ENCODE measurements at regions of chr1 and their contacts with region 1.

Region 1: GRCh38 chr1:6052543-6053205 is 7.0 kb downstream of the KCNAB2 start:
- DNase-seq: no peak
- ATAC-seq: peak; percentile 76
- H3K4me3 ChIP-seq: no peak overlapping the region
- H3K27ac ChIP-seq: no peak overlapping the region
- H3K4me1 ChIP-seq: no peaks in the 10 kb centered on the region
- H3K27me3 ChIP-seq: no peaks in the 10 kb centered on the region
- CTCF ChIP-seq: peak; percentile 54 to 77 (median 65); a peak in 5 of 6 replicates
- POLR2A ChIP-seq: no peak
- RAD21 ChIP-seq: peak; percentile 82

Region 2: GRCh38 chr1:6065093-6065858 is 12.6 kb after region 1 on chr1:
- CTCF ChIA-PET with region 1: no interaction called
- POLR2A ChIA-PET with region 1: no interaction called
- RAD21 ChIA-PET with region 1: no interaction called
- intact Hi-C with region 1: no loop called
- DNase-seq: no peak
- ATAC-seq: no peak
- H3K4me3 ChIP-seq: no peak overlapping the region
- H3K27ac ChIP-seq: no peak overlapping the region
- H3K4me1 ChIP-seq: no peaks in the 10 kb centered on the region
- H3K27me3 ChIP-seq: no peaks in the 10 kb centered on the region
- CTCF ChIP-seq: no peak
- POLR2A ChIP-seq: no peak
- RAD21 ChIP-seq: no peak

Region 3: GRCh38 chr1:6099787-6100765 is 47.4 kb after region 1 on chr1:
- CTCF ChIA-PET with region 1: no interaction called
- POLR2A ChIA-PET with region 1: no interaction called
- RAD21 ChIA-PET with region 1: no interaction called
- intact Hi-C with region 1: loop called (anchors 1 kb)
- DNase-seq: no peak
- ATAC-seq: peak; percentile 81
- H3K4me3 ChIP-seq: no peak overlapping the region
- H3K27ac ChIP-seq: no peak overlapping the region
- H3K4me1 ChIP-seq: no peaks in the 10 kb centered on the region; a peak in 2 of 4 replicates
- H3K27me3 ChIP-seq: no peaks in the 10 kb centered on the region
- CTCF ChIP-seq: peak in 2 of 3 experiments; percentile 25 to 30; a peak in 3 of 6 replicates
- POLR2A ChIP-seq: no peak
- RAD21 ChIP-seq: no peak; the same call in 1 of the 2 replicates

Region 4: GRCh38 chr1:6180212-6180575 is 127.5 kb after region 1 on chr1 and contains the start of gene CHD5:
- CTCF ChIA-PET with region 1: no interaction called
- POLR2A ChIA-PET with region 1: no interaction called
- RAD21 ChIA-PET with region 1: no interaction called
- intact Hi-C with region 1: loop called (anchors 5 kb)
- DNase-seq: no peak
- ATAC-seq: peak; percentile 39
- H3K4me3 ChIP-seq: peak within 1 kb of the TSS; percentile 37 to 54
- H3K27ac ChIP-seq: peak within 1 kb of the TSS; percentile 15; the same call in 1 of the 2 replicates
- H3K4me1 ChIP-seq: peaks cover 12 to 26% of the 10 kb centered on the region in 2 experiments
- H3K27me3 ChIP-seq: no peaks in the 10 kb centered on the region
- CTCF ChIP-seq: no peak
- POLR2A ChIP-seq: no peak
- RAD21 ChIP-seq: no peak
- total RNA-seq, gene CHD5: 6.1 TPM

Region 5: DNA sequence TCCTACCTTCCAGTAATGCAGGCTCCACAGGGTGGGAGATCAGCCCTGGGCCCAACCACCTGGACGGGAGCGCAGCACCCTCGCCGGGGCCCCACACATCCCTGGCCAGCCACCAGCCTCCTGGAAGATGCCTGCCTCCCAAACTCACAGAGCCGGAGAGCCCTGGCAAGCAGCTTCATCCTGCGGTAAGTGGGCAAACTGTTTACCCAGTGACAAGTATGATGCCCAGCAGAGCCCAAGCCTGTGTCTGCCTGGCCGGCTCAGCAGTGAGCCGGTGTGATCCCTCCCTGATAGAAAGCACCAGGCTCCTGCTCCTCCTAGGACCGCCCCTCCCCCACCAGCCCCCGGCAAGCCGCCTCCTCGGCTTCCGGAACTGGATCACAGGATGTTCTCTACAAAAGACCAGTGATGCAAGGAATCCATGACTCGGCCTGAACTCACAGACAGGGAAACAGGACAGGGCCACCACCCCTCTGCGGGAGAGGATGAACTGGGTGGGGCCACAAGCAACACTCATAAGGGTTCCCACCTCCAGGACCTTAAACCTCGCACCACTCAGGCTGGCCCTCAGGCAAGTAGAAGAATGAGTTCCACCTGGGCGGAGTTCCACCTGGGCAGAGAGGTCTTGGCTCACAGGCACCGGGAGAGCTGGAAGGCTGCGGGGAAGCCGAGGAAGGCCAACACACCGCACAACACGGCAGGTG is 333.0 kb after region 1 on chr1:
- CTCF ChIA-PET with region 1: no interaction called
- POLR2A ChIA-PET with region 1: no interaction called
- RAD21 ChIA-PET with region 1: no interaction called
- intact Hi-C with region 1: no loop called
- DNase-seq: peak; percentile 77
- ATAC-seq: peak; percentile 81
- H3K4me3 ChIP-seq: peak overlapping the region; percentile 49 to 58
- H3K27ac ChIP-seq: peak overlapping the region; percentile 62
- H3K4me1 ChIP-seq: peaks cover 29 to 50% of the 10 kb centered on the region in 2 experiments
- H3K27me3 ChIP-seq: no peaks in the 10 kb centered on the region
- CTCF ChIP-seq: no peak
- POLR2A ChIP-seq: no peak
- RAD21 ChIP-seq: no peak

Region 6: GRCh38 chr1:6509919-6510291 is 457.2 kb after region 1 on chr1:
- CTCF ChIA-PET with region 1: no interaction called
- POLR2A ChIA-PET with region 1: no interaction called
- RAD21 ChIA-PET with region 1: no interaction called
- intact Hi-C with region 1: no loop called
- DNase-seq: no peak
- ATAC-seq: no peak
- H3K4me3 ChIP-seq: no peak overlapping the region
- H3K27ac ChIP-seq: no peak overlapping the region
- H3K4me1 ChIP-seq: no peaks in the 10 kb centered on the region
- H3K27me3 ChIP-seq: no peaks in the 10 kb centered on the region
- CTCF ChIP-seq: no peak
- POLR2A ChIP-seq: no peak
- RAD21 ChIP-seq: no peak